ENCODE measurements at regions of chr11 and their contacts with region 1.

Region 1: DNA sequence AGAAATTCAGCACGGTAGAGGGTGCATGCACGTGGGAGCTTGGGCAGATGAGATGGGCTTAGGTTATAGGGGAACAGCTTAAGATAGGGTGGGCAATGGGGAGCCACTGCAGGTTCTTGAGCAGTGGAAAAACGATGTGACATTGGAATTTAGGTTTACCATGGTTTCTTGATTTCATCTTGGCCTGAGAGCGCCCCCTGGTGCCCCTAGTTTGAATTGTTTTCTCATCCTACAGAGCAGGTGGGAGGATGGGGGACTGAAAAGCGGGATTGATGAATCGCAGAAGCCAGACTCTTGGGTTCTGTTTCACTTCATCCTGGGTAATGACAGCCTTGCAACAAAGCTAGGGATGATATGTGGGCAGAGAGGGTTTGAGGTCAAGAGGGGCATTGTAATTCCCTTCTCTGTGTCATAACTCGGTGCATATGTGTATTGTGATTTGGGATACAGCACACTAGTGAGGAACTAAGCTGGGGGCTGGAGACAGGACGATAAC is 6.7 kb upstream of the MCAM start:
- DNase-seq: peak; percentile 80
- H3K4me3 Mint-ChIP-seq: no peak overlapping the region
- H3K27ac Mint-ChIP-seq: no peak overlapping the region
- H3K4me1 Mint-ChIP-seq: peaks cover 13% of the 10 kb centered on the region
- H3K27me3 Mint-ChIP-seq: no peaks in the 10 kb centered on the region
- CTCF ChIP-seq: peak; percentile 65

Region 2: GRCh38 chr11:119144825-119145486 is 178.6 kb before region 1 on chr11:
- CTCF ChIA-PET with region 1: interaction called, 4 read pairs
- POLR2A ChIA-PET with region 1: no interaction called
- intact Hi-C with region 1: loop called (anchors 2 kb)
- DNase-seq: peak; percentile 72
- H3K4me3 Mint-ChIP-seq: no peak overlapping the region
- H3K27ac Mint-ChIP-seq: no peak overlapping the region
- H3K4me1 Mint-ChIP-seq: no peaks in the 10 kb centered on the region
- H3K27me3 Mint-ChIP-seq: peaks cover 16% of the 10 kb centered on the region
- CTCF ChIP-seq: peak; percentile 65

Region 3: GRCh38 chr11:119205574-119206510 is 117.7 kb before region 1 on chr11 and contains the start of gene CBL:
- CTCF ChIA-PET with region 1: interaction called, 21 read pairs
- POLR2A ChIA-PET with region 1: interaction called, 6 read pairs
- intact Hi-C with region 1: no loop called
- DNase-seq: peak; percentile 91
- H3K4me3 Mint-ChIP-seq: peak within 1 kb of the TSS; percentile 92
- H3K27ac Mint-ChIP-seq: peak within 1 kb of the TSS; percentile 68
- H3K4me1 Mint-ChIP-seq: peaks cover 6% of the 10 kb centered on the region
- H3K27me3 Mint-ChIP-seq: no peaks in the 10 kb centered on the region
- CTCF ChIP-seq: peak; percentile 90
- total RNA-seq, gene CBL: 35.5 and 45.7 TPM in 2 replicates

Region 4: GRCh38 chr11:119334174-119334930 is 10.8 kb after region 1 on chr11 and contains the start of gene RNF26:
- CTCF ChIA-PET with region 1: interaction called, 49 read pairs
- POLR2A ChIA-PET with region 1: interaction called, 4 read pairs
- intact Hi-C with region 1: no loop called
- DNase-seq: peak; percentile 99
- H3K4me3 Mint-ChIP-seq: peak within 1 kb of the TSS; percentile 86
- H3K27ac Mint-ChIP-seq: peak within 1 kb of the TSS; percentile 89
- H3K4me1 Mint-ChIP-seq: peaks cover 30% of the 10 kb centered on the region
- H3K27me3 Mint-ChIP-seq: peaks cover 16% of the 10 kb centered on the region
- CTCF ChIP-seq: no peak
- total RNA-seq, gene RNF26: 19.2 and 20.9 TPM in 2 replicates

Region 5: GRCh38 chr11:119373921-119374631 is 50.5 kb after region 1 on chr11:
- CTCF ChIA-PET with region 1: interaction called, 97 read pairs
- POLR2A ChIA-PET with region 1: interaction called, 3 read pairs
- intact Hi-C with region 1: no loop called
- DNase-seq: peak; percentile 81
- H3K4me3 Mint-ChIP-seq: no peak overlapping the region
- H3K27ac Mint-ChIP-seq: no peak overlapping the region
- H3K4me1 Mint-ChIP-seq: peaks cover 48% of the 10 kb centered on the region
- H3K27me3 Mint-ChIP-seq: no peaks in the 10 kb centered on the region
- CTCF ChIP-seq: peak; percentile 96

Region 6: DNA sequence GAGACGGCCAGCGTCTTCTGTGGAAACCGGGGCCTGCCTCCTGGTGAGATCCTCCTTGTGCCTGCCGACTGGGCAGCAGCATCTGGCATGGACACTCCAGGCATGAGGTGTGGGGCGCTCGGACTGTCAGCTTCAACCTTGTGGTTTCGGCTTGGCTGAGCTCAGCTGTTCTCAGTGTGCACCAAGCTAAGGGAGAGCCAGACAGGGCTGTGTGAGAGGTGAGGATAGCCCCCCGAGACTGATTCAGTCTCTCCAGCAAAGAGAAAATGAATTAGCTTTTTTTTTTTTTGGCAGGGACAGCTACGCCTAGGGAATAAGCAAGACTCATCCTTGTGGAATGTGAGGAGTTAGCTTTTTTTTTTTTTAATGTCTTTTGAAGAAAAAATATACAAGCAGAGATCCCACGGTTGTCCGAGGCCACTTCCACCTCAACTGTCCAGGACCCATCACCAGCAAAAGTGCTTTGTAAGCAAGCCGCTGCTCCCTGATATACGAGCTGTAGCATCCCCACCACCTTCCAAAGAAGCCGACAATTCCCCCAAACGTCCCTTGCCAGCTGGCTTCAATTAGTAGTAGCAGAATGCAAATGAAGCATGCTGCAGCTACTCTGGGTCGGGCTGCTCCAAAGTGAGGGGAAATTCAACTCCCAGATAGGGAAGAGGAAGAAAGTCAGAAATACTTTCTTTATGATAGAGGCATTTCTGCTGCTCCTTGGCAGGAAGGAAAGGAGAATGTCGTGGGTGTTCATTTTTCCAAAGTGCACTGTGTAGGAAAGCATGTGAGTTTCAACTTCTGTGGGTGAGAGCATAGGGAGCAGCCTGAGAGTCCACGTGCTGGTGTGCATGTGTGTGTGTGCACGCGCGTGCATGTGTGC is 109.1 kb after region 1 on chr11:
- CTCF ChIA-PET with region 1: no interaction called
- POLR2A ChIA-PET with region 1: no interaction called
- intact Hi-C with region 1: no loop called
- DNase-seq: peak; percentile 58
- H3K4me3 Mint-ChIP-seq: peak overlapping the region; percentile 60
- H3K27ac Mint-ChIP-seq: no peak overlapping the region
- H3K4me1 Mint-ChIP-seq: peaks cover 37% of the 10 kb centered on the region
- H3K27me3 Mint-ChIP-seq: no peaks in the 10 kb centered on the region
- CTCF ChIP-seq: no peak